Natural killer cell (primary cell): ENCODE measurements at regions of chr7 and their contacts with region 1.

Region 1: DNA sequence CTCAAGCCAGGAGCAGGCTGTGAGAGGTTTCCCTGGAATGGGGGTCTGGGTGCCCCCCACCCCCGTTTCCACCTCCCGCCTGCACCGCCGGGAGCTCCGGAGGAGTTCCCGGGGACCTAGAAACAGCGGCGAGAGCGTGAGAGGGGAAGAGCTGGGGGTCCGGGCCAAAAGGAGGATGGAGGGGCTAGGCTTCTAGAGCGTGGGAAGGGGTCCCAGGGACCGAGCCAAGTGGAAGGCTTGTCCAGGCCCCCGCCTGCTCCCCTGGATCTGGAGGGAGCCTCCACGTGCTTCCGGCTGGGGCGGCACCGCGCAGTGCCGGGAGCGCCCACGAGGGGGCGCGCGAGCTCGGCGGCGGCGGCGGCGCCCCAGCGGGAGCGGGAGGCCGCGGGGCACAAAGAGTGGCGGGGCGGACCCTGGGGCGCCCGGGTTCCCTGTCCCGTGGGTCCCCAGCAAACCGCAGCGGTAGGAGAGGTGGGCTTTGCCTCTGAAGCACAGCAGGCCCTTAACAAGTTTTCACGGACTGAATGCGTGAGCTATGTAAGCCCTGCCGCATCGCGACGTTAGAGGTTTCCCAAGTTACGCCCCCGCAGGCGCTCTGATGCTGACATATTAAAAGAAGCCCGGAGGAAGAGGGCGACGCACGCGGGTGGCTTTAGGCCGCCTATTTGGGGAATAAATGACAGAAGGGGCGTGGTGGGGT is 104.4 kb upstream of the LRRC4 start:
- DNase-seq: peak; percentile 69 to 76
- ATAC-seq: peak; percentile 95 to 97 (median 96)
- H3K4me3 ChIP-seq: peak overlapping the region; percentile 55
- H3K4me3 Mint-ChIP-seq: peak overlapping the region; percentile 78
- H3K27ac ChIP-seq: no peak overlapping the region
- H3K27ac Mint-ChIP-seq: no peak overlapping the region
- H3K4me1 ChIP-seq: peaks cover 20% of the 10 kb centered on the region
- H3K4me1 Mint-ChIP-seq: peaks cover 12 to 18% of the 10 kb centered on the region in 2 donors
- H3K27me3 ChIP-seq: peaks cover 32% of the 10 kb centered on the region
- H3K27me3 Mint-ChIP-seq: peaks cover 51 to 63% of the 10 kb centered on the region in 2 donors
- CTCF ChIP-seq: peak; percentile 92

Region 2: DNA sequence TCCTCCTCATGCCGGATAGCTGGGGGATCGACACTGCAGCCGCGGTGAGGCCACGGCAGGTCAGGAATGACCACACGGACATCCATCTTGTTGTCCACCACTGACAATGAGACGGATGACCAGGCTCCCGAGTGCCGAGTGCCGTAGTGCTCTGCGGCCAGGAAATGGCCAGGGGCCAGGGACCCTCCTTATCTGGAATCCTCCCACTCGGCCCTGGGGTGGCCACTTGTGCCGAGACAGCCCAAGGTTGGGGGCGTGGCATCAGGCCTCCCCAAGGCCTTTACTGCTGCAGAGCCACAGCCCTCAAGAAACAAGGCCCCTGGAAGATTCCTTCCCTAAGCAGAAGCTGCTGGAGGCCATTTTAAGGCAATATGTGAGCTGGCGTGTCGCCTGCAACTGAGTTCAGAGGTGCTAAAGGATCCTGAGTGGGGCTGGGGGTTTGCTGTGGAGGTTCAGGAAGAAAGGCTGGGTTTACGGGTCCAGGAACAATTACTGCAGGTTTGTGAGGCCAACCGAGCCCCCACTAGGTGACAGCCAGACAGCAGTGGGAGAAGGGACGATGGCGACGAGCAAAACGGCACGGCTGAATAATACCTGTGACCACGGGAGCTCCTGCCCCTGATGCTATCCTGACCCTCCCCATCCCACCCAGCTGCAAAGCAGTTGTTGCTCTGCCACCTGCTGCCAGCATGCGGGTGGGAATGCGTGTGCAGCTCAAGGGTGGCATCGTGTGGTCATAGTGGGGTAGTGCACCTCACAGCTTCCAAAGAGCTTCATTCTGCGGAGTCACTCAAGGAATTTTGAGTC is 73.8 kb after region 1 on chr7:
- intact Hi-C with region 1: loop called (anchors 1 kb)
- DNase-seq: peak; percentile 57 to 89
- ATAC-seq: peak; percentile 94 to 100 (median 99)
- H3K4me3 ChIP-seq: no peak overlapping the region
- H3K4me3 Mint-ChIP-seq: no peak overlapping the region
- H3K27ac ChIP-seq: no peak overlapping the region
- H3K27ac Mint-ChIP-seq: no peak overlapping the region
- H3K4me1 ChIP-seq: peaks cover 7% of the 10 kb centered on the region
- H3K4me1 Mint-ChIP-seq: peaks cover 5% of the 10 kb centered on the region in 2 donors
- H3K27me3 ChIP-seq: peaks cover 3% of the 10 kb centered on the region
- H3K27me3 Mint-ChIP-seq: peaks cover 0 to 18% of the 10 kb centered on the region in 2 donors
- CTCF ChIP-seq: peak; percentile 89

Region 3: GRCh38 chr7:128322040-128322643 is 186.5 kb after region 1 on chr7:
- intact Hi-C with region 1: loop called (anchors 1 kb)
- DNase-seq: peak in 1 of 2 donors; percentile 67
- ATAC-seq: peak; percentile 50 to 71 (median 67)
- H3K4me3 ChIP-seq: no peak overlapping the region
- H3K4me3 Mint-ChIP-seq: peak overlapping the region; percentile 78
- H3K27ac ChIP-seq: peak overlapping the region; percentile 72
- H3K27ac Mint-ChIP-seq: peak overlapping the region; percentile 87 to 95
- H3K4me1 ChIP-seq: peaks cover 24% of the 10 kb centered on the region
- H3K4me1 Mint-ChIP-seq: peaks cover 44 to 47% of the 10 kb centered on the region in 2 donors
- H3K27me3 ChIP-seq: no peaks in the 10 kb centered on the region
- H3K27me3 Mint-ChIP-seq: no peaks in the 10 kb centered on the region
- CTCF ChIP-seq: peak; percentile 47

Region 4: GRCh38 chr7:128387216-128388144 is 251.8 kb after region 1 on chr7:
- intact Hi-C with region 1: loop called (anchors 2 kb)
- DNase-seq: peak; percentile 58 to 83
- ATAC-seq: peak; percentile 83 to 96 (median 94)
- H3K4me3 ChIP-seq: no peak overlapping the region
- H3K4me3 Mint-ChIP-seq: no peak overlapping the region
- H3K27ac ChIP-seq: no peak overlapping the region
- H3K27ac Mint-ChIP-seq: no peak overlapping the region
- H3K4me1 ChIP-seq: peaks cover 6% of the 10 kb centered on the region
- H3K4me1 Mint-ChIP-seq: peaks cover 0 to 14% of the 10 kb centered on the region in 2 donors
- H3K27me3 ChIP-seq: no peaks in the 10 kb centered on the region
- H3K27me3 Mint-ChIP-seq: no peaks in the 10 kb centered on the region
- CTCF ChIP-seq: peak; percentile 83